Transverse colon (tissue), 4 donors: ENCODE measurements at regions of chr20 and their contacts with region 1.

Region 1: DNA sequence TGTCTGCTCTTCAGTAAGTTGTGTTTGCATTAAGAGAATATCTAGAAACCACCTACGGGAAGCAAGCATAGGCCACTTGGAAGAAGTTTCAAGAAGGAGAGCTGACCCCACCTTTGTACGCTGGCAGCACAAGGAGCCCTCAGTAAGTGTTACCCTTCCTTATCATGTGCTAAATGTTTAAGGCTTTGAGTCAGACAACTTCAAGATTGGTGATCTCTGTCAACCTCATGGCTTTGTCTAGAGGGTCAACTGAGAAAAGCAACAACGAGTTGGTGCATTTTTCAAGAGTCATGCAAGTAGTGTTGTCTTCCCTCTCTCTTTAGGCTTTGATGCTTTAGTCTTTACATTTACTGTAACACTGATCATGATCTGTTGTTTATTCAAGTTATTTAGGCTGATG is 53.2 kb upstream of the SPTLC3 start:
- DNase-seq: no peak
- H3K4me3 ChIP-seq: no peak overlapping the region
- H3K27ac ChIP-seq: no peak overlapping the region
- H3K4me1 ChIP-seq: no peaks in the 10 kb centered on the region
- H3K27me3 ChIP-seq: no peaks in the 10 kb centered on the region
- CTCF ChIP-seq: no peak
- EP300 ChIP-seq: no peak
- POLR2A ChIP-seq: no peak

Region 2: DNA sequence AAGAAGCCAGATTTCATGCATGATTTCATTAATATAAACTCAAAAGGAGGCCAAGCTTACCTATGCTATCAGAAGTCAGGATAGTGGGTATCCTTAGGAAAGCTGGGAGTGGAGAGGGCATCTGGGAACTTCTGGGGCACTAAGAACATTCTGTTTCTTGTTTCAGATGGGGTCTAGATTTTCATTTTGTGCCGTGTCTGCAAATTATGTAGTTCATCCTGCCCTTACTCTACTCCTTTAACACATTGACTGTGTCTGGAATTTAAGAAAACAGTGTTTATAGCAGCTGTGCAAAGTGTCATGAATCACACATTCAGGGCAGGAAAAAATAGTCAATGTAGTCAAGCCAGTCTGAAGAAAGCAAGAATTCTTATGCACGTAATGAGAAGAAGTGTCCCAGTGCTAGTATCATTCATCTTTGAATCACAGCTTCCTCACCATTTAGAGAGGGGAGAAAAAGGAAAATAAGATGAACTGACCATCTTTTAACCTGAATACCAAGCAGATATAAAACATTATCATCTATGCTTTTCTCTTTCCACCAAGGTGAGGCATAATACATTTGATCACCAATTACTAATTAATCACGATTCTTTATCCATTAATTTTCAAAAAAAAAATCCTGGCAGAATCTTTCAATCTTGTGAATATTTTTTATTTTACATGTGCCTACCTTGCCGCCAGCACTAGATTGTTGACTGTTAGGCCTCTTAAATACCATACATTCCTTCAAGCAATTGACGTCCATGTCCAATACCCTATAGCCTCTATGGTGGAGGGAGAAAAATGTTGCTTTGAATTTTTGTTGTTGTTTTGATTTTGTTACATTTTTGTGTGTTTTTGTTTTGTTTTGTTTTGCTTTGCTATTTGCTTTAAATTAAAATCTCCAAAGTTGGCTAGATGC is 41.8 kb after region 1 on chr20:
- in situ Hi-C with region 1: no loop called
- intact Hi-C with region 1: loop called (anchors 2 kb)
- DNase-seq: no peak
- H3K4me3 ChIP-seq: no peak overlapping the region
- H3K27ac ChIP-seq: no peak overlapping the region
- H3K4me1 ChIP-seq: no peaks in the 10 kb centered on the region
- H3K27me3 ChIP-seq: no peaks in the 10 kb centered on the region
- CTCF ChIP-seq: no peak
- EP300 ChIP-seq: no peak
- POLR2A ChIP-seq: no peak